Vagina (tissue), 2 donors: ENCODE measurements at regions of chr4 and their contacts with region 1.

Region 1: DNA sequence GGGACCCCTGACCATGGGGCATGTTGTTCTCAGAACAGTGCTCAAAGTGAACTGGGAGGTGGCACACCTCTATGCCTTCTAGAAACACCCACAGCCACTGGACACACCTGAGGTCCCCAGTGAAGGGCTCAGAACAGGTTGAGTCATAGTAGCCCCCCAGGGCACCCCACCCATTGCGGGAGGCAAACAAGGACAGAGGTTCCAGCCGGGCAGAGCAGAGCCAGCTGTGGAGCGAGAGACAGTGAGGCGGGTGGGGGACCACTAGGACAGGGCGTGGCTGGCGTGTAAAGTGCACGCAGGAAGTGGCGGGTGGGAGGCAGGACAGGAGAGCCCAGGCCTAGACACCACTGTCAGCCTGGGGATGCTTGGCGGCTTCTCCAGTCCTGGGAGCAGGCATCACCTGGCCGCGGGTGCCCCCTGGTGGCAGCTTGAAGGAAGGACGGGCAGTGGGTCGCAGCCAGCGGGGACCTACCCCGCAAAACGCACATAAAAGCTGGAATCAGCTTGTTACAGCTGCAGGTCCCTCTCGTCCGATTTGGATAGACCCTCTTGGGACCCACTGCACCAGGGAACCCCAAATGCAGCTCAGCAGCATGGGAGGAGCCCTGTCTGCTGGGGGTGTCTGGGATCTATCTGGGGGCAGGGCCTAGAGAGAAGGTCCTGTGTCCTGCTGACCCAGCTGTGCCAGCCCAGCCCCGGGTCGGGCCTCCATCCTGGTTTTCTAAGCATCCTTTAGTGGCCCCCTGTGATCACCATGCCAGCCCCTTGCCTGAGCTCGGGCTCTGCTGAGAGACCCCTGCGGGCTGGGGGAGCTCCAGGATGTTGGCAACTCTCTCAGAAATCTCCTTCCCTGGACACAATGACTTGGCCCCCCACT is 57.6 kb downstream of the WFS1 start:
- DNase-seq: no peak
- H3K4me3 ChIP-seq: no peak overlapping the region
- H3K27ac ChIP-seq: no peak overlapping the region
- H3K4me1 ChIP-seq: peaks cover 15% of the 10 kb centered on the region
- H3K27me3 ChIP-seq: no peaks in the 10 kb centered on the region
- CTCF ChIP-seq: peak; percentile 93 to 99 (median 99)
- POLR2A ChIP-seq: no peak

Region 2: GRCh38 chr4:5998333-5998936 is 328.8 kb before region 1 on chr4:
- intact Hi-C with region 1: loop called (anchors 10 kb)
- DNase-seq: no peak
- H3K4me3 ChIP-seq: no peak overlapping the region
- H3K27ac ChIP-seq: no peak overlapping the region
- H3K4me1 ChIP-seq: no peaks in the 10 kb centered on the region
- H3K27me3 ChIP-seq: no peaks in the 10 kb centered on the region
- CTCF ChIP-seq: peak; percentile 62 to 81 (median 73)
- POLR2A ChIP-seq: no peak

Region 3: GRCh38 chr4:6248394-6248793 is 78.9 kb before region 1 on chr4:
- intact Hi-C with region 1: loop called (anchors 2 kb)
- DNase-seq: no peak
- H3K4me3 ChIP-seq: no peak overlapping the region
- H3K27ac ChIP-seq: no peak overlapping the region
- H3K4me1 ChIP-seq: no peaks in the 10 kb centered on the region
- H3K27me3 ChIP-seq: no peaks in the 10 kb centered on the region
- CTCF ChIP-seq: no peak
- POLR2A ChIP-seq: no peak

Region 4: GRCh38 chr4:6386091-6386490 is 58.8 kb after region 1 on chr4:
- intact Hi-C with region 1: no loop called
- DNase-seq: no peak
- H3K4me3 ChIP-seq: no peak overlapping the region
- H3K27ac ChIP-seq: peak overlapping the region; percentile 25
- H3K4me1 ChIP-seq: peaks cover 32% of the 10 kb centered on the region
- H3K27me3 ChIP-seq: no peaks in the 10 kb centered on the region
- CTCF ChIP-seq: no peak
- POLR2A ChIP-seq: no peak

Region 5: DNA sequence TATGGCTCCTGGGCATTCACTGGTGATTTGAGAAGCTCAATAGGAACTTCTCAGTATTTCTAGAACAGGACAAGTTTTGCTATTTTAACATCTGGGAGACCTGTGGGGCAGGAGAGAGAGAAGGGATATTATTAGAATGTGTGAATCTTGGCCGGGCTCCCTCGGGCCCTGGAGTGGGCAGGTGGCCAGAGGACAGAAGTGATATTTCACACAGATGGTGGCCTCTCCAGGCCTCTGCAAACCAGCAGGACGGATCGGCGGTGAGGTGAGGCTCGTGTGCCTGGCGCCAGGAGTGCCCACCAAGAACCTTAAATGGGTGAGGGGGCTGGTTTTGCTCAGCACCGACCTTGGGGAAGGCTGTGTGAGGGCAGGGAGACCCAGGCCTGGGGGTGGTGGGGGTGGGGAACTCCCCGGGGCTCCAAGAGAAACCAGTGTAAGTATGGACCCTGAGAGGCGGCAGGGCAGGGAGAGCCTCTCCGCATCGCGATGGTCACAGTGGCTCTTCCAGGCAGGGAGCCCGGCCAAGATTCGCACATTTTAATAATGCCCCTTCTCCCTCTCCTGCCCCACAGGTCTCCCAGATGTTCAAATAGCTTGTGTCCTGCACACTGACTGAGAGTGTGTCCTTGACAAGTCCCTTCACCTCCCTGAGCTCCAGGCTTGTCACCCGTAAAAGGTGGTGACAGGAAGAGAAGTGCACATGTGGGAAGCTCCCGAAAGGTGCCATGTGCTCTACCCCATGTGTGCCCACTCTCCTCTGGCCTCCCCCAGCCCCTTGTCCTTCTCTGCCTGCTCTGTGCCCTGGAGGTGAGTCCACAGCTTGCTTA is 929.9 kb after region 1 on chr4:
- intact Hi-C with region 1: no loop called
- DNase-seq: no peak
- H3K4me3 ChIP-seq: no peak overlapping the region
- H3K27ac ChIP-seq: no peak overlapping the region
- H3K4me1 ChIP-seq: peaks cover 12% of the 10 kb centered on the region
- H3K27me3 ChIP-seq: no peaks in the 10 kb centered on the region
- CTCF ChIP-seq: no peak
- POLR2A ChIP-seq: no peak